GM23248 (cell line): ENCODE measurements at regions of chr20 and their contacts with region 1.

Region 1: GRCh38 chr20:25178563-25179438 is 16.7 kb upstream of the ENTPD6 start:
- DNase-seq: peak; percentile 92
- H3K4me3 ChIP-seq: no peak overlapping the region
- H3K27ac ChIP-seq: peak overlapping the region; percentile 32
- H3K4me1 ChIP-seq: peaks cover 17% of the 10 kb centered on the region
- H3K27me3 ChIP-seq: peaks cover 6% of the 10 kb centered on the region

Region 2: DNA sequence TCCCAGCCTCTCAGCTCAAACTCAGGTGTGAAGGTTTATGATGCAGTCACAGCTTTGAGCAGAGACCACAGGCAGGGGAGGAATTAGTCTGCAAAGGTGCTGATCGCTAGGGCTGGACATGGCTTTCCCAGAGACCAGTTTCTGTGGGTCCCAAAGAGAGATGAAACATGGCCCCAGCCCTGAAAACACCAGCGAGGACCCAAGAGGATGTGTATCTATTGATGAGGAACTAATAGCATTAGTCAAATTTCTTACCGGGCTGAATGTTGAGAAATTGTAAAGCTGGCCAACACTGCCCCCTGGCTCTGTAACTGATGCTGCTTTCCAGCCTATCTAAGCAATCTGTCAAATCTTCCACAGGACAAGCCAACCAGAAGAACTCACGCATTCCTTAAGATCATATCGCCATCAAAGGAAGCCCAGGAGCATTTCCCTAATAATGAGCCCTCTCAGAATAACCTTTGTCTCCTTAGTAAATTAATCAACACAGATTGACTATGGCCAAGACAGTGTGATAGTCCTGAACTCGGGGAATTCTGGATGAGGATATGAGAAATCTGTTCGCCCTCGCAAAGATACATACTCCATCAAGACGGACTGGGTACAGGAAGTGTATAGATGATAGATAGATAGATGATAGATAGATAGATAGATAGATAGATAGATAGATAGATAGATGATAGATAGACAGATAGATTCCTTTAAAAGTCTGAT is 113.0 kb before region 1 on chr20:
- in situ Hi-C with region 1: loop called (anchors 10 kb)
- DNase-seq: peak; percentile 77
- H3K4me3 ChIP-seq: no peak overlapping the region
- H3K27ac ChIP-seq: no peak overlapping the region
- H3K4me1 ChIP-seq: no peaks in the 10 kb centered on the region
- H3K27me3 ChIP-seq: peaks cover 51% of the 10 kb centered on the region

Region 3: GRCh38 chr20:25129908-25130307 is 48.9 kb before region 1 on chr20:
- in situ Hi-C with region 1: loop called (anchors 10 kb)
- DNase-seq: no peak
- H3K4me3 ChIP-seq: no peak overlapping the region
- H3K27ac ChIP-seq: no peak overlapping the region
- H3K4me1 ChIP-seq: no peaks in the 10 kb centered on the region
- H3K27me3 ChIP-seq: peaks cover 14% of the 10 kb centered on the region; the same call in 1 of the 2 replicates

Region 4: GRCh38 chr20:25324412-25324811 is 145.6 kb after region 1 on chr20:
- in situ Hi-C with region 1: no loop called
- DNase-seq: no peak
- H3K4me3 ChIP-seq: no peak overlapping the region
- H3K27ac ChIP-seq: no peak overlapping the region
- H3K4me1 ChIP-seq: peaks cover 14% of the 10 kb centered on the region
- H3K27me3 ChIP-seq: no peaks in the 10 kb centered on the region